ENCODE measurements at regions of chr19 and their contacts with region 1.

Region 1: DNA sequence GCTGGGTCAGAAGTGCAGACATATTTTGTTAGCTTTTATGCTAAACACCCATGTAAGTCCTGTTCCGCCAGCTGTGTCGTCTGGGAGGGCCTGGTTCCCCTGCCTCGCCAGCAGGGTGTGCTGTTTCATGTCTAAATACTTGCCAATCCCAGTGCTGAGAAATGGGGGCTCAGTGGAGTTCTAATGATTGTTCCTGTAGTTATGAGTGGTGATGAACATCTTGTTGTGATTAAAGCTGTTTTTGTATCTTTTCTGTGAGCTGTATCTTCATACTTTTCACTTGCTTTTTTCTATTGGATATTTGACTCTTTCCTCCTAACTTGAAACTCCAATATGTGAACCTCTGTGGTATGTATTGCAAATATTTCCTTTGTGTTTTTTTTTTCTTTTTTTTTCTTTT is 32.7 kb downstream of the KDM4B start:
- DNase-seq: peak; percentile 71
- H3K4me3 ChIP-seq: no peak overlapping the region
- H3K27ac ChIP-seq: no peak overlapping the region
- H3K4me1 ChIP-seq: no peaks in the 10 kb centered on the region
- H3K27me3 ChIP-seq: no peaks in the 10 kb centered on the region
- CTCF ChIP-seq: peak; percentile 89

Region 2: GRCh38 chr19:4976401-4977298 is 25.0 kb before region 1 on chr19:
- CTCF ChIA-PET with region 1: interaction called, 11 read pairs
- POLR2A ChIA-PET with region 1: no interaction called
- intact Hi-C with region 1: no loop called
- DNase-seq: peak; percentile 51
- H3K4me3 ChIP-seq: no peak overlapping the region
- H3K27ac ChIP-seq: no peak overlapping the region
- H3K4me1 ChIP-seq: peaks cover under 1% of the 10 kb centered on the region
- H3K27me3 ChIP-seq: no peaks in the 10 kb centered on the region
- CTCF ChIP-seq: peak; percentile 49; the same call in 1 of the 2 replicates

Region 3: DNA sequence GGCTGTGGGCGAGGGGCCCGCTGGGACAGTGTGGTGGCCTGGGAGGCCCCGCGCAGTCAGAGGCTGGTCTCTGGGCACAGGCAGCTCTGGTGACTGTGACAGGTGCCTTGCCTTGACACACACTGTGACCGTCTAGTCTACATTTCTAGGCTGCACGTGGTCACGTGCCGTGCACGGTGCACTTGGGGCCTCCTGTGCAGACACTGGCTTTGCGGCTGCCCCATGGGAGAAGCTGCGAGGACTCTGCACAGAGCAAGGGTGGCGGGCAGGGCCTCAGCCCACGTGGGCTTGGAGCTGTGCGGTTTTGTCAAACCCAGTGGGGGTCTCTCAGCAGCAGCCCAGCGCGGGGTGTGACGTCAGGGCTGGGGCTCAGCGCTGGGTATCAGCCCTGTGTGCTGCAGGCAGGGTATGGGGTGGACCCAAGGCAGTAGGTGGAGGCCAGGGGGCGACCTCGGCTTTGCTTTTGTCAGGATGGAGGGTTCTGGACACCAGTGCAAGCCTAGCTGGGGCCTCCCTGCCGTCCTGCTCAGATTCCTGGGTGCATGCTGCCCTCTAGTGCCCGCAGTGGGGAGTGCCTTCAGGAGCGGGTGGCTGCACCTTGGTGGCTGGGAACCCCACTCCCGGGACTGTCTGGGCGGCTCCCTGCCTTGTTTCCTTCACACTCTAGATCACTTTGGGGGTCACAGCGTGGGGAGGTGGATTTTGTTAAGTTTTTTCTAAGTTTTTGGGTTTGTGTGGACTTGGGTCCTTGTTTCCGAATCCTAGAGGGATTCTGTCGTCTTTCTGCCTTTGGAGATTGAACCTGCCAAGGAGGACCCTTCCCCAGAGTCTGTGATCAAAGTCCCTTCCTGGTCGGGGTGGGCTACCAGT is 29.9 kb after region 1 on chr19:
- CTCF ChIA-PET with region 1: interaction called, 12 read pairs
- POLR2A ChIA-PET with region 1: no interaction called
- intact Hi-C with region 1: no loop called
- DNase-seq: peak; percentile 88
- H3K4me3 ChIP-seq: no peak overlapping the region
- H3K27ac ChIP-seq: peak overlapping the region; percentile 25
- H3K4me1 ChIP-seq: peaks cover 30% of the 10 kb centered on the region
- H3K27me3 ChIP-seq: no peaks in the 10 kb centered on the region
- CTCF ChIP-seq: peak; percentile 98

Region 4: GRCh38 chr19:5093297-5093928 is 91.8 kb after region 1 on chr19:
- CTCF ChIA-PET with region 1: no interaction called
- POLR2A ChIA-PET with region 1: no interaction called
- intact Hi-C with region 1: no loop called
- DNase-seq: peak; percentile 84
- H3K4me3 ChIP-seq: no peak overlapping the region
- H3K27ac ChIP-seq: peak overlapping the region; percentile 100
- H3K4me1 ChIP-seq: peaks cover 84% of the 10 kb centered on the region
- H3K27me3 ChIP-seq: no peaks in the 10 kb centered on the region
- CTCF ChIP-seq: no peak

Measured in A673 (cell line).